ENCODE measurements at regions of chr6 and their contacts with region 1.

Region 1: GRCh38 chr6:109397020-109397419 is 14.8 kb upstream of the CD164 start:
- DNase-seq: peak; percentile 63 to 75 (median 65)
- H3K4me3 ChIP-seq: peak overlapping the region in 1 of 7 experiments; percentile 53
- H3K27ac ChIP-seq: no peak overlapping the region
- H3K4me1 ChIP-seq: peaks cover 0 to 28% (median 15%) of the 10 kb centered on the region in 4 experiments
- H3K27me3 ChIP-seq: no peaks in the 10 kb centered on the region

Region 2: GRCh38 chr6:109082188-109082577 is 314.8 kb before region 1 on chr6:
- CTCF ChIA-PET with region 1: interaction called, 23 read pairs
- POLR2A ChIA-PET with region 1: no interaction called
- DNase-seq: peak in 1 of 3 donors; percentile 23
- H3K4me3 ChIP-seq: no peak overlapping the region
- H3K27ac ChIP-seq: no peak overlapping the region
- H3K4me1 ChIP-seq: peaks cover 0 to 37% (median 9%) of the 10 kb centered on the region in 4 experiments
- H3K27me3 ChIP-seq: no peaks in the 10 kb centered on the region